ENCODE measurements at regions of chr22 and their contacts with region 1.

Region 1: DNA sequence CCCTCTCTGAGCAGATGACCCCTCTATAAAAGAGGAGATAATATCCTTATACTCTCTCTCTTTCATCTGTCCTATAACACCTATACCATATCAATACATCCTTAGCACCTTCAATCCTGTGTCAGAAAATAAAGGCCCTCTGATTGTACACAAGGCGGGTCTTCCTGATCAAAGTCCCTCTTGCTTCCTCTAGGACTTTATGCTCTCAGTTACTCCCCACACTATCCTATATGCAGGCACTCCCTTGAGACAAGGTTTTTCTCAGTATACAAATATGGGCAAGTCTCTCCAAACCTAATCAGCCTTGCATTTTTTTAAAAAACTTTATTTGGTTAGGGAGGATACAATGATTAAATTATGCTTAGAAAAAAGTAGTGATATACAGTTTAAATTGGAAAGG is 17.3 kb upstream of the HORMAD2 start:
- DNase-seq: no peak
- ATAC-seq: no peak
- H3K4me3 ChIP-seq: no peak overlapping the region
- H3K4me3 Mint-ChIP-seq: no peak overlapping the region
- H3K27ac ChIP-seq: no peak overlapping the region
- H3K27ac Mint-ChIP-seq: no peak overlapping the region
- H3K4me1 ChIP-seq: no peaks in the 10 kb centered on the region
- H3K4me1 Mint-ChIP-seq: no peaks in the 10 kb centered on the region
- H3K27me3 ChIP-seq: peaks cover 0 to 11% of the 10 kb centered on the region in 2 experiments
- H3K27me3 Mint-ChIP-seq: peaks cover 14 to 16% of the 10 kb centered on the region in 2 donors

Region 2: DNA sequence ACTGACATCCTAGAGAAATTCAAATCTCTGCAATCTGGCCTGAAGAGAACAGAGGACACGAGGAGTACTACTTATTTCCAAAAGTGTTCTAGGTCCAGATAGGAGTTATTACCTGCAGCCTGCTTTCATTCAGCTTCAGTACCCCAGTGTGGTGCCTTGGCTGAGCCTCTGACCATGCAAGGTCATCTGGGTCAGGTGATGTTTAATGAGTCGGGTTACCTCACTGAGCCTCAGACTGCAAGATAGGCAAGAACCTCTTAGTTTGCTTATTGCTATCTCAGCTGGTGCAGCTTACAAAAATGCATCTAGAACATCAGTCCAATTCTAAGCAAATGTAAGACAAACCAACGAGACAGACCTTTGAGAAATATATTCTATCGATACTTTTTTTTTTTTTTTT is 469.0 kb before region 1 on chr22:
- CTCF ChIA-PET with region 1: no interaction called
- POLR2A ChIA-PET with region 1: interaction called in 1 of 2 experiments, 11 read pairs
- DNase-seq: no peak
- ATAC-seq: no peak
- H3K4me3 ChIP-seq: no peak overlapping the region
- H3K4me3 Mint-ChIP-seq: no peak overlapping the region
- H3K27ac ChIP-seq: no peak overlapping the region
- H3K27ac Mint-ChIP-seq: no peak overlapping the region
- H3K4me1 ChIP-seq: peaks cover 3 to 7% of the 10 kb centered on the region in 2 experiments
- H3K4me1 Mint-ChIP-seq: peaks cover 8 to 11% (median 10%) of the 10 kb centered on the region in 3 donors
- H3K27me3 ChIP-seq: no peaks in the 10 kb centered on the region
- H3K27me3 Mint-ChIP-seq: no peaks in the 10 kb centered on the region